Body of pancreas (tissue), 4 donors: ENCODE measurements at regions of chr11 and their contacts with region 1.

Region 1: GRCh38 chr11:47276923-47277322 is 7.0 kb downstream of the MADD start:
- DNase-seq: no peak
- ATAC-seq: no peak
- H3K4me3 ChIP-seq: no peak overlapping the region
- H3K27ac ChIP-seq: no peak overlapping the region
- H3K4me1 ChIP-seq: peaks cover 9% of the 10 kb centered on the region
- H3K27me3 ChIP-seq: no peaks in the 10 kb centered on the region
- CTCF ChIP-seq: no peak
- POLR2A ChIP-seq: no peak

Region 2: DNA sequence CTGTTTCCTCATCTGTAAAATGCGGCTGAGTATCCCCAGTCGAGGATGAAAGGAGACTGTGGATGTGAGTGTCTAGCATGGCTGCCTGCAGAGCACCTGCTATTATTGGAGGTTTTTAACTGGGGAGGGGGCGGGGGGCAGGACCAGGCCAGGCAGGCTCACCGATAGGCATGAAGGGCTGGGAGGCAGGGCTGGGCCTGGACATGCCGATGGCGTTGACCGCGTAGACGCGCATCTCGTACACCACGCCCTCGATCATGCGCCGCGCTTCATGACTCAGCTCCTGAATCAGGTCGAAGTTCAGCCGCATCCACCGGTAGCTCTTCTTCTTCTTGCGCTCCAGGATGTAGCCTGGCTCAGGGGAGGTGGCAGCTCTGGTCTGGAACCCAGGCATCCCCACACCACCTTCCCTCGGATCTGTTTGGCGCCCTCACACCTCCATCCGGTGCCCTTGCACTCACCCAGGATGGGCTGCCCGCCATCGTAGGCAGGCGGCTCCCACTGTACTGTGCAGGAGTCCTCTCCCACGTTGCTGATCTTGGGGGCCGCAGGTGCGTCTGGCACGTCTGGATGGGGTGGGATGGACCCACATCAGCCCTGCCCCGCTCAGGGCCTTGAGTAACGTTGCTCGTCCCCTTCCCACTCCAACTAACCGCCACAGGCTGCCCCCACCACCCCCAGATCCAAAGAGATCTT is 60.5 kb after region 1 on chr11:
- intact Hi-C with region 1: loop called (anchors 5 kb)
- DNase-seq: no peak
- ATAC-seq: no peak
- H3K4me3 ChIP-seq: no peak overlapping the region
- H3K27ac ChIP-seq: no peak overlapping the region
- H3K4me1 ChIP-seq: no peaks in the 10 kb centered on the region
- H3K27me3 ChIP-seq: no peaks in the 10 kb centered on the region
- CTCF ChIP-seq: no peak
- POLR2A ChIP-seq: no peak

Region 3: DNA sequence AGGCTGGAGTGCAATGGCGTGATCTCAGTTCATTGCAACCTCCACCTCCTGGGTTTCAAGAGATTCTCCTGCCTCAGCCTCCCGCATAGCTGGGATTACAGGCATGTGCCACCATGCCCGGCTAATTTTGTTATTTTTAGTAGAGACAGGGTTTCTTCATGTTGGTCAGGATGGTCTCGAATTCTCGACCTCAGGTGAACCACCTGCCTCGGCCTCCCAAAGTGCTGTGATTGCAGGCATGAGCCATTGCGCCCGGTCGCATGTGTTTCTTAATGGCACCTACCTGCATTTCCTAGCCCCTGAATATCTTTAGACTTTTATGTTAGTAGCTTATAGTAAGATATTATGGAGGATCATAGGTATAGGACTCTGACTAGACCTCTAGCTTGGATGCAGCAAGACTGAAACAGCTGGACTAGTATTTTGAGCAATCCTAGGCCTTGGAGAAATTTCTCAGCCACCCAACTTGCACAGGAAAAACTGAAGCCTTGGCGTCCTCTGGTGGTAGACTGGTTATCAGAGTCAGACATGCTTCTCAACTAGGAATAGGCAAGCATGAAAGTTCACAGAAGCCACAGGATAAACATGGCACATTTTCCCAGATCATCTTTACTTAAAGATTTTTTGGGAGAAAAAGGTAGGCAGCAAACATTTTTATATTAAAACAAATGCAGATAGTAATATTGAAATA is 339.9 kb after region 1 on chr11:
- intact Hi-C with region 1: no loop called
- DNase-seq: peak; percentile 27 to 71 (median 37)
- ATAC-seq: no peak
- H3K4me3 ChIP-seq: no peak overlapping the region
- H3K27ac ChIP-seq: no peak overlapping the region
- H3K4me1 ChIP-seq: no peaks in the 10 kb centered on the region
- H3K27me3 ChIP-seq: no peaks in the 10 kb centered on the region
- CTCF ChIP-seq: peak in 6 of 7 experiments; percentile 17 to 56 (median 40)
- POLR2A ChIP-seq: no peak